Endothelial cell of umbilical vein (primary cell): ENCODE measurements at regions of chr1 and their contacts with region 1.

Region 1: DNA sequence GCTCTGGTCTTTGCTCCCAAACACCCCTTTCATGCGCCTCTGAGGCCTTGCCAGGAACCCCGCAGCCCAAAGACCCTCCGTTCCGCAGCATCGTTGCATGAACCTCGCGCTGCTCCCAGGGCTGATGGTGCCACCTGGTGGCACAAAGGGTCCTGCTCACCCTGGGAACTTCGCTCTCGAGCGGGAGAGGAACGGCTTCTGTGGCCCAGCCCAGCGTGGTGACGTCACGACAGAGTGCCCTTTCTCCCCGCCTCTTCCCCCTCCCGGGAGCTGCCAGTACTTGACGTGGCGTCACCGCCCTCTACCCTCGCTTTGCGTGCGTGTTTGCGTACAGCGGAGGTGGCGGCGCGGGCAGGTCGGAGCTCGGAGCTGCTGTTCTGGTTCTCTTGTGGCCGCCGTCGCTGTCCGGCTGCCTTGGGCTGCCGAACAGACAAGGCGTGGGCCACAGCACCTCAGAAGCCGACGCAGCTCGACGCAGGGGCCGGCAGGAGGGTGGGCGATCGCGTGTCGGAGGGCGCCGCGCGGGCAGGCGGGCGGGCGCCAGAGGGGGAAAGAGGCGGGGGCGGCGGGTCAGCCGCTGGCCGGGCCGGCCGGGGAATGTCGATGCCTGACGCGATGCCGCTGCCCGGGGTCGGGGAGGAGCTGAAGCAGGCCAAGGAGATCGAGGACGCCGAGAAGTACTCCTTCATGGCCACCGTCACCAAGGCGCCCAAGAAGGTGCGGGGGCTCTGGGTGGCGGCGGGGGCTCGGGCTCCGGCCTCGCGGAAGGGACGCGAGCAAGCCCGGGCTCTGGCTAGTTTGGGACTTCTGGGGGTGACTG is at the start of gene AHCYL1:
- DNase-seq: peak; percentile 98
- H3K4me3 ChIP-seq: peak within 1 kb of the TSS; percentile 87 to 94 (median 91)
- H3K27ac ChIP-seq: peak within 1 kb of the TSS; percentile 95
- H3K4me1 ChIP-seq: peaks cover 31% of the 10 kb centered on the region
- H3K27me3 ChIP-seq: no peaks in the 10 kb centered on the region
- CTCF ChIP-seq: peak; percentile 97 to 98
- POLR2A ChIP-seq: peak; percentile 50
- total RNA-seq, gene AHCYL1: 64.3 and 74.2 TPM in 2 replicates

Region 2: DNA sequence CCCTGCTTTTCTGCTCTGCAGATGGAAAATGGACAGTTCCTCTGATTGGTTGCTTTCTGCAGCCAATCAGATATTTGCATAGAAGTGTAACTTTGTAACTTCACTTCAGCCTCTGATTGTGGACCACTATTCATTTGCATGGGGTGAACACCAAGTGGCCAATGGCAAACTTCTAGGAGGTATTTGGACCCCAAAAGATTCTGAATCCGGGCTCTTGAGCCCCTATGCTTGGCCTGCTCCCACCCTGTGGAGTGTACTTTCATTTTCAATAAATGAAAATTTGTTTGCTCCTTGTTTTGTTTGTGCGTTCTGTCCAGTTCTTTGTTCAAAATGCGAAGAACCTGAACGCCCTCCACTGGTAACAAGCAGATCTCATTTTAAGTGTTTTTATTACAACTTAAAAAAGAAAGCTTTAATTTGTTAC is 335.2 kb before region 1 on chr1:
- CTCF ChIA-PET with region 1: interaction called, 38 read pairs
- POLR2A ChIA-PET with region 1: no interaction called
- dilution Hi-C with region 1: no loop called
- intact Hi-C with region 1: no loop called
- DNase-seq: peak; percentile 60
- H3K4me3 ChIP-seq: peak overlapping the region; percentile 18 to 54 (median 37)
- H3K27ac ChIP-seq: no peak overlapping the region
- H3K4me1 ChIP-seq: no peaks in the 10 kb centered on the region
- H3K27me3 ChIP-seq: peaks cover 16 to 23% of the 10 kb centered on the region in 2 experiments
- CTCF ChIP-seq: peak in 1 of 2 donors; percentile 27
- POLR2A ChIP-seq: no peak

Region 3: DNA sequence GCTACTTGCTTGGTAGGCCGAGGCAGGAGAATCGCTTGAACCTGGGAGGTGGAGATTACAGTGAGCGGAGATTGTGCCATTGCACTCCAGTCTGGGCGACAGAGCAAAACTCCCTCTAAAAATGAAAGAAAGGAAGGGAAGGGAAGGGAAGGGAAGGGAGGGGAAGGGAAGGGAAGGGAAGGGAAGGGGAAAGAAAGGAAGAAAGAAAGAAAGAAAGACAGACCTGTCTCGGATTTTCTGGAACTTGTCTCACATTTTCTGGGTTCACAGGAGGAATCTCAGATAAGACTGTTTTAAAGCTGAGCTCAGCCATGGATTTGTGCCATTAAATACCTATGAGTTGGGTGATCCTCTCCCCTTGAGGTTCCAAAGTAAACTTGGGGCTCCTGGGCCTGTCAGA is 259.7 kb before region 1 on chr1:
- CTCF ChIA-PET with region 1: no interaction called
- POLR2A ChIA-PET with region 1: no interaction called
- dilution Hi-C with region 1: no loop called
- intact Hi-C with region 1: no loop called
- DNase-seq: no peak
- H3K4me3 ChIP-seq: no peak overlapping the region
- H3K27ac ChIP-seq: no peak overlapping the region
- H3K4me1 ChIP-seq: no peaks in the 10 kb centered on the region
- H3K27me3 ChIP-seq: peaks cover 5 to 8% of the 10 kb centered on the region in 2 experiments
- CTCF ChIP-seq: no peak
- POLR2A ChIP-seq: no peak

Region 4: DNA sequence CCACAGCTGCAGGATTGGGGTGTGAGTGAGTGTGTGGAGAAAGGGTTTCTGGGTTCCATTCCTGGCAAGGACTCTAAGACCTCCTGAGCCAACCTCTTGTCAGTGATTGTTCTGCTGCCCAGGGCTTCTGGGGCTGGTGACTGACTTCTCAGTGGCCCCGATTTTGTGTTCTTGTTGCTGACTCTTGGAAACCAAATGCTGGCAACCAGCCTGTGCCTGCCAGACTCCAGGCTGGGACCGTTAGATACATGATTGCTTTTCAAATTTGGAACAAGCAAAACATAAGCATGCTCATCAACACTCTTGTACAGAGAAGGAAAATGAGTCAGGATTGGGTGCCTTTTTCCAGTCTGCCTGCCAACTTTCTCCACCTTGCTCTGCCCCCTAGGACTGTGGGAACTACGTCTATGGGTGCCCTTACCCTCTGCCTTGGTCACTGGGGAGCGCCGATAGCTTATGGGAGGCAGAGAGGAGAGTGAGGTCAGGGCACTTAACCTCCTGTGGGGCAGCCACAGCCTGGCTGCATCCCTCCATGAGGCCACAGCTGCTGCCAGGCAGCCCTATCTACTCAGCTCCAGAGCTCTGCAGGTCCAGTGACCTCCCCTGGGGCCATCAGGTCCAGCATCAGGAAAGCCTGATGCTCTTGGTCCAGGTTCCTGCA is 181.6 kb before region 1 on chr1:
- CTCF ChIA-PET with region 1: interaction called, 14 read pairs
- POLR2A ChIA-PET with region 1: no interaction called
- dilution Hi-C with region 1: no loop called
- intact Hi-C with region 1: no loop called
- DNase-seq: peak; percentile 29
- H3K4me3 ChIP-seq: no peak overlapping the region
- H3K27ac ChIP-seq: no peak overlapping the region
- H3K4me1 ChIP-seq: no peaks in the 10 kb centered on the region
- H3K27me3 ChIP-seq: peaks cover 0 to 2% of the 10 kb centered on the region in 2 experiments
- CTCF ChIP-seq: no peak
- POLR2A ChIP-seq: no peak

Region 5: GRCh38 chr1:109895720-109896504 is 88.8 kb before region 1 on chr1:
- CTCF ChIA-PET with region 1: interaction called, 20 read pairs
- POLR2A ChIA-PET with region 1: no interaction called
- dilution Hi-C with region 1: no loop called
- intact Hi-C with region 1: no loop called
- DNase-seq: peak; percentile 85
- H3K4me3 ChIP-seq: no peak overlapping the region
- H3K27ac ChIP-seq: peak overlapping the region; percentile 71
- H3K4me1 ChIP-seq: peaks cover 43% of the 10 kb centered on the region
- H3K27me3 ChIP-seq: no peaks in the 10 kb centered on the region
- CTCF ChIP-seq: no peak
- POLR2A ChIP-seq: no peak

Region 6: GRCh38 chr1:109923131-109923945 is 61.3 kb before region 1 on chr1:
- CTCF ChIA-PET with region 1: interaction called, 90 read pairs
- POLR2A ChIA-PET with region 1: interaction called, 4 read pairs
- dilution Hi-C with region 1: no loop called
- intact Hi-C with region 1: loop called (anchors 1 kb)
- DNase-seq: no peak
- H3K4me3 ChIP-seq: no peak overlapping the region
- H3K27ac ChIP-seq: no peak overlapping the region
- H3K4me1 ChIP-seq: no peaks in the 10 kb centered on the region
- H3K27me3 ChIP-seq: no peaks in the 10 kb centered on the region
- CTCF ChIP-seq: peak; percentile 39 to 51
- POLR2A ChIP-seq: no peak

Region 7: DNA sequence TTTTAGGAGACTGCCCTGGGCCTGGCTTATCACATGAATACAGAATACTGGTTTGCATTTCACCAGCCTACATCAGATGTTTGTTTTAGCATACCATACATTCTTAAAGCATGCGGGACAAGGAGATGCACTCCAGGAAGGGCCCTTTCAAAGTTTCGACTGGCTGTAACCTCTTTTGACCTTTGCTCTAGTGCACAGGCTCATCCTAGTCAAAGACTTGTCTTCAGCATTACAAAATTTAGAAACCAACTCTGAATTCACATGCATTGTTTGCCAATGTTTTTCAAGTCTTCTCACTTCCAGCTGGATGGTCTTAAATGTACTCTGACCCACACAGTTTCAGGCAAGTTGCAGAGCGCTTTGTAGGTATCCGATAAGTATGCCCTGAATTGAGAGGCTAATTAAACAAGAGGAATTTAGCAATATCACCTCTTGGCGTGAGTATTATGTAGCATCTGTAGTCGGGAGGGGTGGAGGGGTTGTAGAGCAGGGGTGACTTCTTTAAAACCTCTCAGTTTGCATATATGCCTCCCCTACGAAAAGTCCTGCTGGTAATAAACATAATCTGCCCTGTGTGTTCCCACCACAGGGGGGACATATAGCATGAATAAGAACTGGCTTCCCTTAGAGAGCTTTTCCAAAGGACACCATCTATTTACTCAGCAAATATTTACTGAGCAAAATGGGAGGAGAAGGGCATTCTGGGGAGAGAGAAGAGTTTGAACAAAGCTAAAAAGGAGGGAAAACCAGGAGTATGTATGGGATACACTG is 24.5 kb before region 1 on chr1:
- CTCF ChIA-PET with region 1: interaction called, 17 read pairs
- POLR2A ChIA-PET with region 1: no interaction called
- dilution Hi-C with region 1: no loop called
- intact Hi-C with region 1: no loop called
- DNase-seq: no peak
- H3K4me3 ChIP-seq: no peak overlapping the region
- H3K27ac ChIP-seq: no peak overlapping the region
- H3K4me1 ChIP-seq: peaks cover 13% of the 10 kb centered on the region
- H3K27me3 ChIP-seq: no peaks in the 10 kb centered on the region
- CTCF ChIP-seq: no peak
- POLR2A ChIP-seq: no peak

Region 8: GRCh38 chr1:110011527-110012041 is 26.9 kb after region 1 on chr1:
- CTCF ChIA-PET with region 1: interaction called, 54 read pairs
- POLR2A ChIA-PET with region 1: no interaction called
- dilution Hi-C with region 1: no loop called
- intact Hi-C with region 1: loop called (anchors 1 kb)
- DNase-seq: peak; percentile 49
- H3K4me3 ChIP-seq: no peak overlapping the region
- H3K27ac ChIP-seq: no peak overlapping the region
- H3K4me1 ChIP-seq: no peaks in the 10 kb centered on the region
- H3K27me3 ChIP-seq: no peaks in the 10 kb centered on the region
- CTCF ChIP-seq: peak; percentile 24 to 40
- POLR2A ChIP-seq: no peak

Region 9: DNA sequence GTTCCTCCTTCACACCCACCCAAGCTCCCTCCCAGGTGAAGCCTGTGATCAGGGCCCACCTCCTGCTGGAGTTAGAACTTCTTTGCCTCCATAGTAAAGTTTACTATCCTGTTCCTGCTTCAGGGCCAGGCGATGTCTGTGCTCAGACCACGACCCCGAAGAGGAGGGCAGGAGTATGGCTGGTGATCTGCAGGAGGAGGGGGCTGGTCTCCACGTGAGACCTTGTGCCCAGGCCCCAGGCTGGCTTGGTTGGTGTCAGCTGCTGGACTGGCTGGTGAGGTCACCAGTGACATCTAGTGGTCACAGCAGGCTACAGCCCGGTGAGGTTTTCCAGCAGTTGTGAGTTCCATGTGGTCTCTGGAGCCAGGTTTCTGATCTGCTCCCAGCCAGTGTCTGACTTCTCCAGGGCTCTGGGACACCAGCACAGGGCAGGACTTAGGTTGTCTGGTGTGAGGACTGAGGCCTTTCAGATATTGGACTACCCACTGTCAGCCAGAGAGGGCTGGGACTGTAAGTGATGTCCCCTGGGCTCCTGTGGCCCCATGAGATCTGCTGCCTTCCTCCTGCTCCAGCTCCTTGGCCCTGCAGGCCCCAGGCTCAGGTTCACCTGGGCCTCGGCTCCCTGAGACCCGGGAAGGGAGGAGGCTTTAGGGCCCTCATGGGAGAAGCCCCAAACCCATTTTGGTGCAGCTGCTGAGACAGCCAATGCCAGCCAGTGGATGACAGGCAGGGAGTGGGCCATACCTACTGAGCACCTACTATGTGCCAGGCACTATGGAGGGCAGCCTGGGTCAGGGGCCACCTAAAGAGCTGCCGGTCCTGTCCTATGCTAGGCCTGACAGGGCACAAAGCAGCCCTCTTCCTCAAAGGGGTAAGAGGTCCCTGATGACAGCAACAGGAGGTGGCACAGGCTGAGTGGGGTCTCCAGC is 121.6 kb after region 1 on chr1:
- CTCF ChIA-PET with region 1: no interaction called
- POLR2A ChIA-PET with region 1: no interaction called
- dilution Hi-C with region 1: no loop called
- intact Hi-C with region 1: no loop called
- DNase-seq: peak; percentile 65
- H3K4me3 ChIP-seq: no peak overlapping the region
- H3K27ac ChIP-seq: no peak overlapping the region
- H3K4me1 ChIP-seq: peaks cover 3% of the 10 kb centered on the region
- H3K27me3 ChIP-seq: peaks cover 0 to 3% of the 10 kb centered on the region in 2 experiments
- CTCF ChIP-seq: peak; percentile 80 to 96
- POLR2A ChIP-seq: no peak